ENCODE measurements at regions of chr13 and their contacts with region 1.

Region 1: DNA sequence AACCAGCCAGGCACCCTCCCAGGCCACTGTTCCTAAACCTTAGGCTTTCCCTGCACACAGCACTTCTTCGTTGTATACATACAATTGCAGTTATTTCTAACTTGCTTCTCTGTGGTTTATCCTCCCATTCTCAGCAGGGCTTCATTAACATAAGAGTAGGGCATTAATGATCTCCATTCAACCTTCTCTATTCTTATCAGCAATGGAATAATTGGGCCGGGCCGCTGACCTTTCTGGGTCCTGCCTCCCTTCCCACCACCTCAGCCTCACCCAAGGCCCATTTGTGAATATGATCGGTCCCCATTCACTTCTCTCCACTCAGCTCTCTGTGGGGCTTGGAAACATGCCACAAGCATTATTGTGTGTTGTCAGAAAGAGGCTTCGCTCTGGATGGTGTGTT is 184.2 kb downstream of the SUCLA2 start:
- DNase-seq: no peak
- H3K4me3 ChIP-seq: no peak overlapping the region
- H3K27ac ChIP-seq: no peak overlapping the region
- H3K4me1 ChIP-seq: peaks cover 0 to 15% (median 9%) of the 10 kb centered on the region in 4 experiments; a peak in 3 of 7 replicates
- H3K27me3 ChIP-seq: no peaks in the 10 kb centered on the region
- CTCF ChIP-seq: no peak
- EP300 ChIP-seq: peak in 1 of 2 experiments; percentile 37; a peak in 1 of 3 replicates
- POLR2A ChIP-seq: no peak
- RAD21 ChIP-seq: no peak

Region 2: DNA sequence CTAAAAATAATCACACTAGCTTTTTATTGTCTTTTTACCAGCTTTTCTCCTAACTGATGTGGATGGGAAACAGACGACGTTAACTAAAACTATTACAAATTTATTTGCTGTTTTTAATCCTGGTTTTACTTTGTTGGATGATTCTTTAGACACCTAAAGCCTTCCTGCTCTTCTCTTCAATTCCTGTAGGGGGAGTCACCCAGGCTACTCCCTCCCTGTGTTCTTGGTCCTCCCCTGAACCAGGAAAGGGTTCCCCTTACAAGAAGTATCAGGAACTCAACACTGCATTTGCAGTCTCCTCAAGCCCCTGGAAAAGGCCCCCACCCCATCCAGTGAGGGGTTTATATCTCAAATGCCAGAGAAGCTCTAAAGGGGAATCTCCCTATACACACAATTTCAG is 21.9 kb before region 1 on chr13:
- CTCF ChIA-PET with region 1: interaction called, 12 read pairs
- POLR2A ChIA-PET with region 1: no interaction called
- DNase-seq: no peak
- H3K4me3 ChIP-seq: no peak overlapping the region
- H3K27ac ChIP-seq: no peak overlapping the region
- H3K4me1 ChIP-seq: no peaks in the 10 kb centered on the region
- H3K27me3 ChIP-seq: no peaks in the 10 kb centered on the region
- CTCF ChIP-seq: peak; percentile 30 to 55 (median 41); a peak in 3 of 4 replicates
- EP300 ChIP-seq: no peak
- POLR2A ChIP-seq: no peak
- RAD21 ChIP-seq: peak; percentile 41 to 57; a peak in 3 of 4 replicates

Region 3: DNA sequence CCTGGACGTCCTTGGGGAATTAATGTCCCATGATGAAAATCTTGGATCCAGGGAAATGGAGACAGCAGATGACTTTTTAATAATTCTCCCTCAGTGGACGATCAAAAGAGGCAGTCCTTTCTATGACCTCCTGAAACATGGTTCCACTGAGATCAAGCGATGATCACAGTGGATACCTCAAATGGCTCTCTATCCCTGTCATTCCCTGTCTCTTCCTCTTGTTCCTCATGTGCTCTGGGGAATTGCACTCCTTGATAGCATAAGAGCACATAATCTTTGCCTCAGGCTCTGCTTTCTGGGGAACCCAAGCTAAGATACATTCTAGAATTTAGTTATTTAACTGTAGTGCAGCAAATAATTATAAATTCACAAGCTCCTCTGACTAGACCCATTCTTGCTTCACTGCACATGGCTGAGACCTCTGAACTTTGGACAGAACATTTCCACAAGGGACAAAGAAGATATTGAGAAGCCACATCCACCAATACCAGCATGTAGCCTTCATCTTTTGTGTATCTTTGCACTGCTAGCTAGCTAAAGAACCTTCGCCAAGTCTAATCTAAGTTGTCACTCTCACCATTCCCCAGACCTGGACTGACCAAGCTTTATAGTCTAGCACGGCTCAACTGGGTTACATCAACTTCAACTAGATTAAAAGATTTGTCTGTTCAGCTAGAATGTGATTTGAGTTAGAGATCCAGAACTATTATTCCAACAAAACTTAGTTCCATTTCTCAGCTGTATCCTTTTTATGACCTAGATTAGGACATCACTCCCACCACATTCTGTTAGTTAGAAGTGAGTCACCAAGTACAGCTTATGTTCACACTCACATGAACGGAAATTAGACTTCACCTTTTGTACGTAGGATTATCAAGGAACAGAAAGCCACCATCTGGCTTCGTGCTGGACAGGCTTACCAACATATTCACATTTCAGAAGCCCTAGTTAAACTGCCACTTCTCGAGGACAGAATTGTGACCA is 41.5 kb after region 1 on chr13:
- CTCF ChIA-PET with region 1: no interaction called
- POLR2A ChIA-PET with region 1: no interaction called
- DNase-seq: no peak
- H3K4me3 ChIP-seq: no peak overlapping the region
- H3K27ac ChIP-seq: no peak overlapping the region
- H3K4me1 ChIP-seq: peaks cover 0 to 2% (median 0%) of the 10 kb centered on the region in 4 experiments; a peak in 1 of 7 replicates
- H3K27me3 ChIP-seq: no peaks in the 10 kb centered on the region
- CTCF ChIP-seq: no peak
- EP300 ChIP-seq: no peak
- POLR2A ChIP-seq: no peak
- RAD21 ChIP-seq: no peak

Region 4: GRCh38 chr13:47976325-47976724 is 159.5 kb after region 1 on chr13:
- CTCF ChIA-PET with region 1: no interaction called
- POLR2A ChIA-PET with region 1: no interaction called
- DNase-seq: no peak
- H3K4me3 ChIP-seq: no peak overlapping the region
- H3K27ac ChIP-seq: no peak overlapping the region
- H3K4me1 ChIP-seq: no peaks in the 10 kb centered on the region
- H3K27me3 ChIP-seq: no peaks in the 10 kb centered on the region
- CTCF ChIP-seq: no peak
- EP300 ChIP-seq: no peak
- POLR2A ChIP-seq: no peak
- RAD21 ChIP-seq: no peak

Measured in H1 (cell line).